ENCODE measurements at regions of chr11 and their contacts with region 1.

Region 1: GRCh38 chr11:8566613-8567210 is 27.3 kb downstream of the STK33 start:
- DNase-seq: peak; percentile 55
- H3K4me3 ChIP-seq: no peak overlapping the region
- H3K27ac ChIP-seq: peak overlapping the region; percentile 29
- H3K4me1 ChIP-seq: peaks cover 13% of the 10 kb centered on the region
- H3K27me3 ChIP-seq: no peaks in the 10 kb centered on the region
- CTCF ChIP-seq: peak; percentile 43 to 50

Region 2: GRCh38 chr11:7986768-7987559 is 579.7 kb before region 1 on chr11 and contains the start of gene EIF3F:
- CTCF ChIA-PET with region 1: interaction called, 23 read pairs
- dilution Hi-C with region 1: no loop called
- in situ Hi-C with region 1: no loop called
- intact Hi-C with region 1: no loop called
- DNase-seq: peak; percentile 98
- H3K4me3 ChIP-seq: peak within 1 kb of the TSS; percentile 68 to 98 (median 79)
- H3K27ac ChIP-seq: peak within 1 kb of the TSS; percentile 84
- H3K4me1 ChIP-seq: peaks cover 31% of the 10 kb centered on the region
- H3K27me3 ChIP-seq: no peaks in the 10 kb centered on the region
- CTCF ChIP-seq: peak; percentile 84 to 86
- total RNA-seq, gene EIF3F: 234 to 399 TPM

Region 3: GRCh38 chr11:8033305-8034105 is 533.2 kb before region 1 on chr11:
- CTCF ChIA-PET with region 1: no interaction called
- dilution Hi-C with region 1: no loop called
- in situ Hi-C with region 1: no loop called
- intact Hi-C with region 1: loop called (anchors 10 kb)
- DNase-seq: peak; percentile 56
- H3K4me3 ChIP-seq: no peak overlapping the region
- H3K27ac ChIP-seq: no peak overlapping the region
- H3K4me1 ChIP-seq: no peaks in the 10 kb centered on the region
- H3K27me3 ChIP-seq: no peaks in the 10 kb centered on the region
- CTCF ChIP-seq: peak; percentile 85 to 95

Region 4: DNA sequence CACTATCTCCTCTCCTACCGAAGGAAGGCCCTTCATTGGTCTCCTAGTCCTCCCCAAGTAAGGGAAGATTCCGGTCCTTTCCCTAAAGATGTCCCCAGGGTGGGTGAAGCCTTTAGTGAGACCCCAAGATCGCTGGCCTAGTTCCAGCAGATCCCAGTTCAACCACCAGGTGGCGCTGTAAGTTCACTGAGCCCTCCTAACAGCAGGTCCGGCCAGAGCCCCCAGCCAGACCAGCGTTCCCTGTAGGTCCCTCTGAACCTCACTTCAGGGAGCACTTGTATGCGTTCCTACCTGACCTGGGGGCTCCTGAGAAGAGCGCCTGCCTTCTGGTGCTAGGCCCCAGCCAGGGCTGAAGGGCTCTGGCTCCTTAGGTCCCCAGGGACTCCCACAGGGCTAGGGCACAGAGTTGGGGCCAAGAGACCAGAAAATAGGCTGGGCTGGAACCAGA is 341.1 kb before region 1 on chr11:
- CTCF ChIA-PET with region 1: no interaction called
- dilution Hi-C with region 1: no loop called
- in situ Hi-C with region 1: loop called (anchors 10 kb)
- intact Hi-C with region 1: loop called (anchors 1 kb)
- DNase-seq: no peak
- H3K4me3 ChIP-seq: no peak overlapping the region
- H3K27ac ChIP-seq: no peak overlapping the region
- H3K4me1 ChIP-seq: peaks cover 39% of the 10 kb centered on the region
- H3K27me3 ChIP-seq: no peaks in the 10 kb centered on the region
- CTCF ChIP-seq: peak; percentile 63 to 93

Region 5: GRCh38 chr11:8239536-8240228 is 327.0 kb before region 1 on chr11:
- CTCF ChIA-PET with region 1: no interaction called
- dilution Hi-C with region 1: no loop called
- in situ Hi-C with region 1: no loop called
- intact Hi-C with region 1: no loop called
- DNase-seq: no peak
- H3K4me3 ChIP-seq: no peak overlapping the region
- H3K27ac ChIP-seq: no peak overlapping the region
- H3K4me1 ChIP-seq: no peaks in the 10 kb centered on the region
- H3K27me3 ChIP-seq: no peaks in the 10 kb centered on the region
- CTCF ChIP-seq: no peak

Region 6: GRCh38 chr11:8328848-8329330 is 237.8 kb before region 1 on chr11:
- CTCF ChIA-PET with region 1: no interaction called
- dilution Hi-C with region 1: no loop called
- in situ Hi-C with region 1: no loop called
- intact Hi-C with region 1: loop called (anchors 1 kb)
- DNase-seq: peak; percentile 88
- H3K4me3 ChIP-seq: no peak overlapping the region
- H3K27ac ChIP-seq: no peak overlapping the region
- H3K4me1 ChIP-seq: peaks cover 7% of the 10 kb centered on the region
- H3K27me3 ChIP-seq: no peaks in the 10 kb centered on the region
- CTCF ChIP-seq: peak; percentile 83 to 94

Region 7: DNA sequence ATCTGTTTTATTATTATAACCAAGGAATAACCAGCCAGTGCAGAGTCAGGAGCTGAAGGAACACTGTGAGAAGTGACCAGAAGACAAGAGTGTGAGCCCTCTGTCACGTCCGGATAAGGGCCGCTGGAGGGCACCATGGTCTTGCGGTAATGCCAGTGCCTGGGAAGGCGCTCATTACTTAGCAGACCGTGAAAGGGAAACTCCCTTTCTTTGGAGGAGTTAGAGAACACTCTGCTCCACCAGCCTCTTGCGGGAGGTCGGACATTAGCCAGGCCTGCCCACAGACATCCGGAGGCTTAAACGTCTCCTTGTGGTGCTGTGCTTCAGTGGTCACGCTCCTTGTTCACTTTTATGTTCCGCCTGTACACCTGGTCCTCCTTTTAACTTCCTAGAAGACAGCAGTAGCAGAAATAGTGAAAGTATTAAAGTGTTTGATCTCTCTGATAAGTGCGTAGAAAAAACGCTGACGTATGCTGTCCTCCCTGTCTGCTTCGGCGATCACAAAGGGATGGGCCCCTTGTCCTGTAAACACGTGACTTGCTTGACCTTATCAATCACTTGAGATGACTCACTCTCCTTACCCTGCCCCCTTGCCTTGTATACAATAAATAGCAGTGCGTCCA is 182.4 kb before region 1 on chr11:
- CTCF ChIA-PET with region 1: no interaction called
- dilution Hi-C with region 1: no loop called
- in situ Hi-C with region 1: no loop called
- intact Hi-C with region 1: no loop called
- DNase-seq: no peak
- H3K4me3 ChIP-seq: no peak overlapping the region
- H3K27ac ChIP-seq: no peak overlapping the region
- H3K4me1 ChIP-seq: peaks cover 4% of the 10 kb centered on the region
- H3K27me3 ChIP-seq: no peaks in the 10 kb centered on the region
- CTCF ChIP-seq: peak in 1 of 2 donors; percentile 43

Region 8: GRCh38 chr11:8533332-8533731 is 33.4 kb before region 1 on chr11:
- CTCF ChIA-PET with region 1: no interaction called
- dilution Hi-C with region 1: no loop called
- in situ Hi-C with region 1: no loop called
- intact Hi-C with region 1: loop called (anchors 2 kb)
- DNase-seq: peak; percentile 79
- H3K4me3 ChIP-seq: peak overlapping the region in 1 of 3 experiments; percentile 36
- H3K27ac ChIP-seq: peak overlapping the region; percentile 46
- H3K4me1 ChIP-seq: peaks cover 2% of the 10 kb centered on the region
- H3K27me3 ChIP-seq: no peaks in the 10 kb centered on the region
- CTCF ChIP-seq: peak; percentile 23 to 69

Region 9: GRCh38 chr11:8744423-8744822 is 177.7 kb after region 1 on chr11:
- CTCF ChIA-PET with region 1: no interaction called
- dilution Hi-C with region 1: no loop called
- in situ Hi-C with region 1: no loop called
- intact Hi-C with region 1: no loop called
- DNase-seq: peak; percentile 91
- H3K4me3 ChIP-seq: no peak overlapping the region
- H3K27ac ChIP-seq: peak overlapping the region; percentile 41
- H3K4me1 ChIP-seq: peaks cover 16% of the 10 kb centered on the region
- H3K27me3 ChIP-seq: no peaks in the 10 kb centered on the region
- CTCF ChIP-seq: no peak